ENCODE measurements at regions of chr4 and their contacts with region 1.

Region 1: DNA sequence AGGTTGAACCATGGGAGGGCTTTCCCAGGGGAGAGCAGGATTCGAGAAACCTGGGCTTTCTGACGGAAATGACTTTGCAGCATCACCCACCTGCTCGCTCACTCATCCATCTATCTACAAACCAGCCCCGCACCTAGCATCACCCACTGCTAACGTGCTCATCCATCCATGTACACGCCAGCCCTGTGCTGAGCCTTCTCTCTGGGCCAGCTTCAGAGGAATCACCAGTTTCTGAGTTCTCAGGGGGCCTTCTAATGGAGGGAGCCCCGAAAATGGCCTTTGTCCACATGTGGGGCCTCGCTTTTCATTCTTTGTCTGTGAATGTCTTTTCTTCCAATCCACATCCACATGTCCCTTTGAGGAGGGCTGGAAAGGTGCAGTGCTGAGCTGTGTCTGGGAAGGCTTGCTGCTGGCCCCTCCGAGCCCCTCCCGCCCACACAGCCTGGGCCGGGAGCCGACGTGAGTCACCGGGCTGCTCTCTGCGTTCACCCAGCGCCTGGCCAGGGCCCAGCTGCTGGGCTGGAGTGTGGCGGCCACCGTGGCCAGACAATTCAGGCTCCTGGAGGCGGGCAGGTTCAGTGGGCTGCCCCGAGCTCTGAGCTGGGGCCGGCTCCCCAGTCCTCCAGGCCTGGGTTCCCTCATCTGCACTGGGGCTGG is 14.7 kb downstream of the SORCS2 start:
- DNase-seq: no peak
- CTCF ChIP-seq: no peak

Region 2: GRCh38 chr4:6815029-6815836 is 391.8 kb before region 1 on chr4:
- in situ Hi-C with region 1: no loop called
- DNase-seq: no peak
- CTCF ChIP-seq: no peak

Region 3: DNA sequence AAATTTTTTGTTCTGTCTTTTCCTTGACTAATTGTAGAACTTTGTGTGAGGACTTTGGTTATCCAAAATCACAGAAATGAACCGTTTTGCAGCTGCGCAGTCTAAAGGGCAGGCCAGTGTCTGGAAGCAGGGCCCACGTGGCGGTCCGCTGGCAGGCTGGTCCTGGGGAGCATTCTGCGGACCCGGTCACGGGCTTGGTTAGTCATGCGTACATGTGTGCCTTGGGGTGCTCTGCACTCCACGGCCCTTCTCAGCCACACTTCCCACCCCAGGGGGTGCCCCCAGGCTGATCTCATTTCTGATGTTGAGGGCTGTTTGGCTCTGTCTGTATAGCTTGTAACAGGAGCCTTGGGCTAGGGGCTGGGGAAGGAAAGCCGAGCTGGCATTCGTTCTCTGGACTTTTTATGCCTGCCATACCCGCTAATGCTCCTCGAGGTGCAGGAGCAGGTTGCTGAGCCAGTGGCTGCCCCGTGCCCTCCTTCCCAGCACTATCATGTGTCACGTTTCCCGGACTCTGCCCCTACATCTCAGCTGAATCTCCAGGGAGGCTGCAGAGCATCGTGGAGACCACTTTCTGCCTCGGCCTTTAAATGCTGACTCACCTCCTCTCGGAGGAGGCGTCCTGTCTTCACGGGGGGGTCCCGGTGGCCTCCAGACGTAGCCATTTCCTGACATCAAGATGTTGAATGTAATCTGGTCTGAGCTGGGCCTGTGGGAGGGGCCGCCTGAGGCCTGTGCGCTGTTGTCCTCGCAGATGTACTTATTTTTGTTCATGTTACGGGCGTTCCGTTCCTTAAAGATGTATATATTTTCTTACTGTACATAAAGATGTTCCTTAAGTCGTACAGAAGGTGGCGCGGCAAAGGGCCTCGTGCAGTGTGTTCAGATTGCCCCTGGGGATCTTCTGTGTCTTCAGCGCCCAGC is 175.3 kb before region 1 on chr4:
- in situ Hi-C with region 1: no loop called
- DNase-seq: no peak
- CTCF ChIP-seq: no peak

Region 4: DNA sequence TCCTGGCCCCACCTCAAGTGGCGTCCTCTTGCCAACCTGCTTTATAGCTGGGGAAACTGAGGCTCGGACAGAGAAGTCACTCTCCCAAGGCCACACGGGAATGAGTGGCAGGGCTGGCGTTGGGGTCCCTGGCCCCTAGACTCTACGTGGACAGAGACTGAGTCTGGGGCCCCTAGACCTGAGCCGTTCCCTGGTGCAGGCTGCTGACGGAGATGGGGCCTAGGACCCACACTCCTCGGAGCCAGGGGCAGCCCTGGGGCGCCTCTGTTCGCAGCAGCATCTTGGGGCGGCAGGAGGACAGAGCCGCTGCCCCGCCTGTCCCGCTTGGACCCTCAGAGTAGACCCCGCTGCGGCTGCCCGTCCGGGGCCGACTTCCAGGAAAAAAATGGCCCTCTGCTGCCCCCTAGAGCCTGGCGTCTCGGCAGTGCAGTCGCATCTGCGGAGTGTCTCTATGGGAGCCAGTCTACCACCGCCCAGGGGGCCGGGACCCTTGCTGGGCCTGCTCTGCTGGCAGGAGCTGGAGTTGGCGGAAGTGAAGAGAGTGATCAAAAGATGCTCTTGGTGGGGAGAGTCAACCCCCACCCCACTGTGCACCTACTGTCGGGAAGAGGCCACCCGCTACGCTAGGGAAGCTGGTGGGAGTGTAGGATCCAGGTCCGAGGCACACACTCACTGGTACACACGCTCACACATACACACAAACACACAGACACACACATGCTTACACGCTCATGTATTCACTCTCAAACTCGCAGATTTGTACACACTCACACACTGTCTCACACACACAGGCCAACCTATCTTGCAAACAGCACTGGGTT is 512.5 kb after region 1 on chr4:
- in situ Hi-C with region 1: loop called (anchors 25 kb)
- DNase-seq: peak; percentile 89
- CTCF ChIP-seq: peak; percentile 83